GM12878 (cell line): ENCODE measurements at regions of chr14 and their contacts with region 1.

Region 1: GRCh38 chr14:53630336-53630735 is 326.3 kb downstream of the BMP4 start:
- DNase-seq: no peak
- ATAC-seq: peak; percentile 31
- H3K4me3 ChIP-seq: no peak overlapping the region
- H3K27ac ChIP-seq: no peak overlapping the region
- H3K4me1 ChIP-seq: no peaks in the 10 kb centered on the region
- H3K27me3 ChIP-seq: no peaks in the 10 kb centered on the region
- CTCF ChIP-seq: no peak
- EP300 ChIP-seq: no peak
- POLR2A ChIP-seq: no peak
- RAD21 ChIP-seq: no peak

Region 2: GRCh38 chr14:54267172-54267571 is 636.8 kb after region 1 on chr14:
- CTCF ChIA-PET with region 1: no interaction called
- POLR2A ChIA-PET with region 1: interaction called, 10 read pairs
- RAD21 ChIA-PET with region 1: no interaction called
- SMC1A ChIA-PET with region 1: no interaction called
- in situ Hi-C with region 1: no loop called
- intact Hi-C with region 1: no loop called
- DNase-seq: peak; percentile 58
- ATAC-seq: peak; percentile 89
- H3K4me3 ChIP-seq: no peak overlapping the region
- H3K27ac ChIP-seq: no peak overlapping the region; the same call in 1 of the 2 replicates
- H3K4me1 ChIP-seq: peaks cover 6% of the 10 kb centered on the region; the same call in 1 of the 2 replicates
- H3K27me3 ChIP-seq: no peaks in the 10 kb centered on the region
- CTCF ChIP-seq: no peak
- EP300 ChIP-seq: peak in 1 of 2 experiments; percentile 32; a peak in 1 of 4 replicates
- POLR2A ChIP-seq: no peak
- RAD21 ChIP-seq: no peak